Transverse colon (tissue), 4 donors: ENCODE measurements at regions of chr6 and their contacts with region 1.

Region 1: DNA sequence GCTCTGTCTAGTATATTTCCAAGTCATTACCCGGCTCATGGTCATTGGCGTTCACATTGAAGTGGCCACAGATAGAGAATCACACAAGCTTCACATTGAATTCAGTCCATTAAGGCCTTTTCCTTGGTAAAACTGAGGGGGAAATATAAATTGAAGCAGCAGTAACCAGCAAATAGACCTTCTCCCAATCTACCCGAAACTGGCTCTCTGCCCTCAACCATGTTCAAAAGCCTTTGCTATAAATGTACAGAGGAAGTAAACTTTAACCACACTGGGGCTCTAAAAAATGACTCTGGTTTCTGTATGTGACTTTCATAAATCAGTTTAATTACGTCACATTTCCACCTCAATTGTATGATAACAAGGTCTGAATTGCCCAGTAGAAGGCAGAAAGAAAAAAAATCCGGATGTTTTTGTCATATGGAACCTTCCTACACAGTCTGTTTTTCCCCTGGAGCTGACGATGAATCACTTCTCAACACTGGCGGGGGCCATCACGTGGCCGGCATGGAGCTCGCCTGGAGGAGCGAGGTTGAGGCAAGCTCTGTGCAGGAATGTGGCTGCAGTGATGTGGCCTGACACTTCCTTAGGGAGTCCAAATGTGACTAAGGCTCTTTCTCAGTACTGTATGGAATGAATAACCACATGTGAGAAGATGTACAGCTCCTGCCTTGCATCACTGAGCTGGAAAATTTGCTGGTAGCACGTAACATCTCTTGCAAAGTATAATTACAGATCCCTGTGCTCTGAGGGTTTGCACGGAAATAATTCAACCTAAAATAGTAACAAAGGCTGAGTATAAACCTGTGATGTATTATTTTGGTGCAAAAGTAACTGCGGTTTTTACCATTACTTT is 58.6 kb upstream of the SNX9 start:
- DNase-seq: peak; percentile 87
- H3K4me3 ChIP-seq: peak overlapping the region in 1 of 4 donors; percentile 6
- H3K27ac ChIP-seq: peak overlapping the region; percentile 80 to 84 (median 81)
- H3K4me1 ChIP-seq: peaks cover 26 to 52% (median 40%) of the 10 kb centered on the region in 4 donors
- H3K27me3 ChIP-seq: no peaks in the 10 kb centered on the region
- CTCF ChIP-seq: peak in 1 of 5 experiments; percentile 10
- EP300 ChIP-seq: peak; percentile 46
- POLR2A ChIP-seq: peak; percentile 43

Region 2: GRCh38 chr6:157813757-157814455 is 49.5 kb after region 1 on chr6:
- in situ Hi-C with region 1: loop called in 1 of 4 experiments (anchors 10 kb)
- intact Hi-C with region 1: no loop called
- DNase-seq: no peak
- H3K4me3 ChIP-seq: no peak overlapping the region
- H3K27ac ChIP-seq: peak overlapping the region; percentile 36 to 65 (median 47)
- H3K4me1 ChIP-seq: peaks cover 0 to 18% (median 9%) of the 10 kb centered on the region in 4 donors
- H3K27me3 ChIP-seq: no peaks in the 10 kb centered on the region
- CTCF ChIP-seq: no peak
- EP300 ChIP-seq: no peak
- POLR2A ChIP-seq: no peak

Region 3: DNA sequence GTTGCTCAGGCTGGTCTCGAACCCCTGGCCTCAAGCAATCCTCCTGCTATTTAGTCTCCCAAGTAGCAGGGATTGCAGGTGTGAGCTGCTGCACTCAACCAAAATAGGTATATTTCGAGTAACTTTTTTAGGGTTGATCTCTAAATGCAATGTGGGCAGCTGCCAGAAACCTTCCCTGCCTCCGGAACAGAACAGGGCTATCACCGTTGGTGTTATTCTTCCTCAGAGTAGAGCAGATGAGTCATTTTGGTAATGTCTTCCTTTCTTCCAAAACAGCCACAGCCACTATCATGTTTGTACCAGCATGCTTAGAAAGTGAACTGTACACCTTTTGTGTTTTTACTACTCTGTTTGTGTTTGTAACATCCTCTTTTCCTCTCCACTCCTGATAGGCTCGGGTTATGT is 102.8 kb after region 1 on chr6:
- in situ Hi-C with region 1: loop called in 3 of 4 experiments (anchors 5 to 10 kb)
- intact Hi-C with region 1: loop called (anchors 5 kb)
- DNase-seq: no peak
- H3K4me3 ChIP-seq: no peak overlapping the region
- H3K27ac ChIP-seq: no peak overlapping the region
- H3K4me1 ChIP-seq: peaks cover 0 to 15% (median 5%) of the 10 kb centered on the region in 4 donors
- H3K27me3 ChIP-seq: no peaks in the 10 kb centered on the region
- CTCF ChIP-seq: no peak
- EP300 ChIP-seq: no peak
- POLR2A ChIP-seq: no peak

Region 4: GRCh38 chr6:157974341-157974894 is 210.0 kb after region 1 on chr6:
- in situ Hi-C with region 1: no loop called
- intact Hi-C with region 1: no loop called
- DNase-seq: no peak
- H3K4me3 ChIP-seq: no peak overlapping the region
- H3K27ac ChIP-seq: no peak overlapping the region
- H3K4me1 ChIP-seq: peaks cover 0 to 3% (median under 1%) of the 10 kb centered on the region in 4 donors
- H3K27me3 ChIP-seq: no peaks in the 10 kb centered on the region
- CTCF ChIP-seq: no peak
- EP300 ChIP-seq: no peak
- POLR2A ChIP-seq: no peak

Region 5: GRCh38 chr6:158072083-158072721 is 307.8 kb after region 1 on chr6:
- in situ Hi-C with region 1: loop called in 2 of 4 experiments (anchors 10 to 25 kb)
- intact Hi-C with region 1: no loop called
- DNase-seq: peak; percentile 75
- H3K4me3 ChIP-seq: no peak overlapping the region
- H3K27ac ChIP-seq: no peak overlapping the region
- H3K4me1 ChIP-seq: peaks cover 0 to 18% (median 5%) of the 10 kb centered on the region in 4 donors
- H3K27me3 ChIP-seq: no peaks in the 10 kb centered on the region
- CTCF ChIP-seq: peak; percentile 77 to 86 (median 81)
- EP300 ChIP-seq: no peak
- POLR2A ChIP-seq: no peak